ENCODE measurements at regions of chr4 and their contacts with region 1.

Region 1: GRCh38 chr4:15784959-15785634 is 7.0 kb downstream of the CD38 start:
- DNase-seq: peak; percentile 96
- H3K4me3 ChIP-seq: peak overlapping the region; percentile 41
- H3K27ac ChIP-seq: peak overlapping the region; percentile 96
- H3K4me1 ChIP-seq: peaks cover 60% of the 10 kb centered on the region
- CTCF ChIP-seq: no peak

Region 2: GRCh38 chr4:15162465-15163283 is 622.4 kb before region 1 on chr4:
- CTCF ChIA-PET with region 1: no interaction called
- POLR2A ChIA-PET with region 1: no interaction called
- intact Hi-C with region 1: no loop called
- DNase-seq: peak; percentile 11
- H3K4me3 ChIP-seq: no peak overlapping the region
- H3K27ac ChIP-seq: no peak overlapping the region
- H3K4me1 ChIP-seq: no peaks in the 10 kb centered on the region
- CTCF ChIP-seq: peak; percentile 68

Region 3: GRCh38 chr4:15250021-15250441 is 535.1 kb before region 1 on chr4:
- CTCF ChIA-PET with region 1: no interaction called
- POLR2A ChIA-PET with region 1: no interaction called
- intact Hi-C with region 1: no loop called
- DNase-seq: no peak
- H3K4me3 ChIP-seq: no peak overlapping the region
- H3K27ac ChIP-seq: no peak overlapping the region
- H3K4me1 ChIP-seq: no peaks in the 10 kb centered on the region
- CTCF ChIP-seq: no peak

Region 4: DNA sequence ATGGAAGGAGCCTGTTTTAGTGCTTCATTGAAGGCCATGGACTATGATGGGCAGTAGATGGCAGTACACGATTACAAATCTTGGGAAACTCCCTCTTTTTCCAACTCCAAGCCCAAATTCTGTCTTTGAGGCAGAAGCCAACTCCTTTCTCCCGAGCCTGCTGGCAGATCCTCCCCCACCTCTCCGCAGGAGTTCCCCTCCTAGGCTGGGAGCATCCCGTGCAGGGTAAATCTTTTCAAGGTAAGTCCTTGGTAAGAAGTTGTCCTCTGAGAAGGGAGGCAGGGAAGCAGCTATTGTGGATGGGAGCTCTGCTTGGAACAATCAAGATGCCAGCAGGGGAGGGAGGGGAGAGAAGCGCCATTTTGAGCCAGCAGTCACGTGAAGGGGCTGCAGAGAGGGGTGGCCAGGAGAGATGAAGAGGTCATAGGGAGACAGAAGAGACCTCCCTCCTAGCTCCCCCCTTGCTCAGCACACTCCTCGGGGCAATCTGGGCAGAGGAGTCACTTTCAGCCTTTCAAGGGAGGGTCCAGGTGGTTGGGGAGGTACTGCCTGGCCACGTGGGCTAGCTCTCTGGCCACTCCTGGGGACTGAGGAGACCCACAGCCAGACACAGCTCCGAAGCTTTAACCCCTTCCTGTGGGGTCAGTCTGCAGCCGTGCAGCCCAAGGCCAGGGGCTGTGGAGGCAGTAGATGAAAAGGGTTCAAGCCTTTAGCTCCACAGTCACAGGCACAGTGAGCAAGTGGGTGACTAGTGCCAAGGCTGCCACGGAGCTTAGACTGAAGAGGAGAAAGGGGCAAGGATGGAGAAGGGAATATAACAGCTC is 305.8 kb before region 1 on chr4:
- CTCF ChIA-PET with region 1: no interaction called
- POLR2A ChIA-PET with region 1: no interaction called
- intact Hi-C with region 1: no loop called
- DNase-seq: peak; percentile 44
- H3K4me3 ChIP-seq: no peak overlapping the region
- H3K27ac ChIP-seq: no peak overlapping the region
- H3K4me1 ChIP-seq: no peaks in the 10 kb centered on the region
- CTCF ChIP-seq: peak; percentile 80

Region 5: DNA sequence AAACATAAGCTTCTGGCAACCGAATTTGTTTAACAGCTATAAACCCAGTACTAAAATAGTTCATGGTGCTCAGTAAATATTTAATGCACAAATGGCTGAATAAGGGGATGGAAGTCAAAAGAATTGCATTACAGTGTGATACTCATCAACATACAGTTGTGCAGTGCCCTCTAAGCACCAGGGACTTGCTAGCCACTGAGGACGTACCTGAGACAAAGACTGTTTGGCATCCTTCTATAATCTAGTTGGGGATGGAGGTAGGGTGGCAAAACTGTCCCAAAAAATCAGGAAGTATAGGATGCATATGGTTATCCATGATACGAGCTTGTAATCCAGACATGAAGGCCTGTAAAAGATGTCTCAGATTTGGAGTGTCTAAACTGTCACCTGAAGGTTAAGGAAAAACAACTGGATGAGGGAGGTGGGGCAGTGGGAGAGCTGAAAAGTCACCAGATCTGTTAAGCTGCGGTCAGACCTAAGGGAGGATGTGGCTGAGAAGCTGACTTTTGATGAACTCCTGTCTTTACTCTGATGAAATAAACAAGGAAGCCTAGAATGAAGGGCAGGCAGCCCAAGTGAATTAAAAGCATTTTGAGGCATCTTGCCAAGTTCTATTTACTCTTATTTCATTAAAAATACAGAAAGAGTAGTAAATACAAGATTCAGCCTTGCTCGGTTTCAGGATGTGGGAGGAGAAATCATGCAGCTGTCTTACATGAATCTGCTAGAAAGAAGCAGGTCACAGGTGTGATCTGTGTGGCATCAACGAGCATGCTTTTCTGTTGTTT is 19.0 kb before region 1 on chr4:
- CTCF ChIA-PET with region 1: interaction called, 5 read pairs
- POLR2A ChIA-PET with region 1: interaction called, 9 read pairs
- intact Hi-C with region 1: loop called (anchors 1 kb)
- DNase-seq: peak; percentile 82
- H3K4me3 ChIP-seq: peak overlapping the region; percentile 43
- H3K27ac ChIP-seq: peak overlapping the region; percentile 85
- H3K4me1 ChIP-seq: peaks cover 39% of the 10 kb centered on the region
- CTCF ChIP-seq: no peak

Region 6: GRCh38 chr4:15799701-15800100 is 14.6 kb after region 1 on chr4:
- CTCF ChIA-PET with region 1: no interaction called
- POLR2A ChIA-PET with region 1: interaction called, 15 read pairs
- intact Hi-C with region 1: loop called (anchors 2 kb)
- DNase-seq: peak; percentile 56
- H3K4me3 ChIP-seq: peak overlapping the region; percentile 26
- H3K27ac ChIP-seq: peak overlapping the region; percentile 81
- H3K4me1 ChIP-seq: peaks cover 72% of the 10 kb centered on the region
- CTCF ChIP-seq: no peak

Region 7: DNA sequence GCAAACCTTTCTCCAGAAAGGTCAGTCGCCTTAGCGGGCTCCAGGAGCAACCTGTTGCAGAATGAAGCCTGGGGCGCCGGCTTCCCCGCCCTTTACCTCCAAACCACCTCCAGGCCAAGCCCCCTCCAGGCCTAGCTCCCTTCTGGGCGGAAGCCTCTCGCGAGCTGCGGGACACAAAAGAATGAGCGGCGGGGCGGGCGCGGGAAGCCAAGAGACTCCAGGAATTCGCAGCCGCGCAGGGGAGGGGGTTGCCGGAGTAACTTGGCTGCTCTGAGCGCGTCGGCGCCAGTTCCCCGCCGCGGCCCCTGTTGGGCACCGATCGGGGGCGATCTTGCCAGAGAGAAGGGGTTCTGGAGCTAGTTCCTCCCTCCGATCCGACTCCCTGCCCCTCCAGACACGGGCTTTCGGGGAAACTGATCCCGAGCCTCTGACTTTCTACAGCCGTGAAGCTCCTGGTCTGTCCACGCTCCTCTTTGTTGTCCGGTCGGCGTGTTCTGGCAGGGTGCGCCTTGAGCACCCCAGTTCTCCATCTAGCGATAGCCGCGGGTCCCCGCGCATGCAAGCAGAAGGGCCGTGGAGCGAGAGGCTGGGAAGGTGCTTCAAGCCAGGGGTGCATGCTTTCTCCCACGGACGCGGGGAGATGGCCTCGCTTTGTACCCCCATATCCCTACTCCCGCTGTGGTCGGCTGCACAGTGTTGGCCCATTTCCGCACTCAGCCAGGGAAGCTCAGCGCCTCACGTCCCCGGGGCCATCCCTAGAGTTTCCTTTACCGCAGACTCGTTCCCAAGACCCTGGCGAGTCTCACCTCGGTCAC is 297.5 kb after region 1 on chr4:
- CTCF ChIA-PET with region 1: no interaction called
- POLR2A ChIA-PET with region 1: no interaction called
- intact Hi-C with region 1: no loop called
- DNase-seq: no peak
- H3K4me3 ChIP-seq: no peak overlapping the region
- H3K27ac ChIP-seq: no peak overlapping the region
- H3K4me1 ChIP-seq: no peaks in the 10 kb centered on the region
- CTCF ChIP-seq: no peak